GM12878 (cell line): ENCODE measurements at regions of chr5 and their contacts with region 1.

Region 1: GRCh38 chr5:28344803-28345433 is 1306.5 kb upstream of the CDH9 start:
- DNase-seq: peak; percentile 0
- ATAC-seq: peak; percentile 80
- H3K4me3 ChIP-seq: no peak overlapping the region
- H3K27ac ChIP-seq: no peak overlapping the region
- H3K4me1 ChIP-seq: no peaks in the 10 kb centered on the region
- H3K27me3 ChIP-seq: no peaks in the 10 kb centered on the region
- CTCF ChIP-seq: peak; percentile 46 to 56 (median 54); a peak in 4 of 6 replicates
- EP300 ChIP-seq: no peak
- POLR2A ChIP-seq: no peak
- RAD21 ChIP-seq: peak; percentile 54

Region 2: DNA sequence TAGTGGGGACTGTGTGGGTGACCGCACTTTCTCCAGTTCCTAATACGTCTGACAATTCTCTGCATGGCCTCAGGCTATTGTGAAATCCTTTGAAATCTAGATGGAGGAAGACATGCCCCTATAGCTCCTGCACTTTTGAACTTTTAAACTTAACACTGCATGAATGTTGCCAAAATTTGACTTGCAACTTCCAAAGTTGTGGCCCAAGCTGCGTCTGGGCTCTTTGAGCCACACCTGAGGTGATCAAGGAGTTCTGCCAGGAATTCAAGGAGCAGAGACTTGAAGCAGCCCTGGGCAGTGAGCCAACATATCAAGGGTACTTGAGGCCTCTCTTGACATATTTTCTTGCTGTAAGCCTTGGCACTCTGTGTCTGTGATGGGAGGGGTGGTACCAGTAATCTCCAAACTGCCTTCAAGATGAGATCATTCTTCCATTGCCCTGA is 29.6 kb after region 1 on chr5:
- CTCF ChIA-PET with region 1: no interaction called
- POLR2A ChIA-PET with region 1: no interaction called
- RAD21 ChIA-PET with region 1: no interaction called
- SMC1A ChIA-PET with region 1: no interaction called
- in situ Hi-C with region 1: no loop called
- intact Hi-C with region 1: no loop called
- DNase-seq: no peak
- ATAC-seq: no peak
- H3K4me3 ChIP-seq: no peak overlapping the region
- H3K27ac ChIP-seq: no peak overlapping the region
- H3K4me1 ChIP-seq: no peaks in the 10 kb centered on the region
- H3K27me3 ChIP-seq: no peaks in the 10 kb centered on the region
- CTCF ChIP-seq: no peak
- EP300 ChIP-seq: no peak
- POLR2A ChIP-seq: no peak
- RAD21 ChIP-seq: no peak

Region 3: DNA sequence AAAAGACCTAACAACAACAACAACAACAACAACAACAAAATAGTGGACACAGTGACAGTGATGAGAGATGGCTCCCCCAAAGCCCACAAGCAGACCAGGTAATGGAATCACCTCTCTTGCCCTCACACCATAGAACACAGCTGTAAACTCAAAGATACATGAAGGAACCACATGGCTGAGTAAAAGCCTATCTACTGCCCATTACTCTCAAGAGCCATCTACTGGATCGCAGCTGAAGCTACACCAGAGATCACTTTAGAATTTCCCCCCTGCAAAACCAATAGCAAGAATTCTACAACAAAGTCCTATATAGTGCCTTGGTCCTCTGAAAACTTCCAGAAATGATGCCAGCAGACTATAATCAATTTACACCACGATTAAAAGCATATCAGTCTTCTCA is 231.1 kb after region 1 on chr5:
- CTCF ChIA-PET with region 1: interaction called, 8 read pairs
- POLR2A ChIA-PET with region 1: no interaction called
- RAD21 ChIA-PET with region 1: interaction called, 3 read pairs
- SMC1A ChIA-PET with region 1: interaction called, 19 read pairs
- in situ Hi-C with region 1: no loop called
- intact Hi-C with region 1: loop called (anchors 2 kb)
- DNase-seq: no peak
- ATAC-seq: peak; percentile 72
- H3K4me3 ChIP-seq: no peak overlapping the region
- H3K27ac ChIP-seq: no peak overlapping the region
- H3K4me1 ChIP-seq: no peaks in the 10 kb centered on the region
- H3K27me3 ChIP-seq: no peaks in the 10 kb centered on the region
- CTCF ChIP-seq: peak in 1 of 3 experiments; percentile 13; a peak in 2 of 6 replicates
- EP300 ChIP-seq: no peak
- POLR2A ChIP-seq: no peak
- RAD21 ChIP-seq: no peak

Region 4: DNA sequence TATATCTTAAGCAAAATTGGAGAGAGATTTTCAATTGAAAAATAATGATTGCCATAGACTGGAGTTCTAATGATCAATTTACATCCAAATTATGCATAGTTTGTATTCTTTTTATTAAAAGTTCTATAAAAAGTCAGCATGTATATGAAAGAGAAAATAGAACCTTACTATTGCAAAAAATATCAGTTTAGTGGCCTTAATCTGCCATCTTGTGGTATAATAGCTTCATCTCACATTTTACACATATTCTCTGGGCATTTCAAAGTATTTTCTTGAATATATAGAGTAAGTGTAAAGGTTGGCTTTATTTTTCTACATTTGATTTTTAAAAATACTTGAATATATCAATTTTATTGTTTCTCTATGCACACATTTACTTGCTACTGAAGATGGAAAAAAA is 552.0 kb after region 1 on chr5:
- CTCF ChIA-PET with region 1: interaction called, 8 read pairs
- POLR2A ChIA-PET with region 1: no interaction called
- RAD21 ChIA-PET with region 1: no interaction called
- SMC1A ChIA-PET with region 1: interaction called, 3 read pairs
- in situ Hi-C with region 1: no loop called
- intact Hi-C with region 1: loop called (anchors 10 kb)
- DNase-seq: no peak
- ATAC-seq: no peak
- H3K4me3 ChIP-seq: no peak overlapping the region
- H3K27ac ChIP-seq: no peak overlapping the region
- H3K4me1 ChIP-seq: no peaks in the 10 kb centered on the region
- H3K27me3 ChIP-seq: no peaks in the 10 kb centered on the region
- CTCF ChIP-seq: no peak; a peak in 1 of 6 replicates
- EP300 ChIP-seq: no peak
- POLR2A ChIP-seq: no peak
- RAD21 ChIP-seq: no peak